Activated B cell treated with CpG ODN at 0.5 μM for 24 hours (primary cell): ENCODE measurements at regions of chr19 and their contacts with region 1.

Region 1: GRCh38 chr19:16584248-16585141 is 12.3 kb upstream of the SLC35E1 start:
- DNase-seq: peak; percentile 78
- ATAC-seq: peak; percentile 46
- H3K4me3 Mint-ChIP-seq: peak overlapping the region; percentile 94
- H3K27ac Mint-ChIP-seq: peak overlapping the region; percentile 99
- H3K4me1 Mint-ChIP-seq: peaks cover 92% of the 10 kb centered on the region
- H3K27me3 Mint-ChIP-seq: no peaks in the 10 kb centered on the region
- CTCF ChIP-seq: no peak

Region 2: DNA sequence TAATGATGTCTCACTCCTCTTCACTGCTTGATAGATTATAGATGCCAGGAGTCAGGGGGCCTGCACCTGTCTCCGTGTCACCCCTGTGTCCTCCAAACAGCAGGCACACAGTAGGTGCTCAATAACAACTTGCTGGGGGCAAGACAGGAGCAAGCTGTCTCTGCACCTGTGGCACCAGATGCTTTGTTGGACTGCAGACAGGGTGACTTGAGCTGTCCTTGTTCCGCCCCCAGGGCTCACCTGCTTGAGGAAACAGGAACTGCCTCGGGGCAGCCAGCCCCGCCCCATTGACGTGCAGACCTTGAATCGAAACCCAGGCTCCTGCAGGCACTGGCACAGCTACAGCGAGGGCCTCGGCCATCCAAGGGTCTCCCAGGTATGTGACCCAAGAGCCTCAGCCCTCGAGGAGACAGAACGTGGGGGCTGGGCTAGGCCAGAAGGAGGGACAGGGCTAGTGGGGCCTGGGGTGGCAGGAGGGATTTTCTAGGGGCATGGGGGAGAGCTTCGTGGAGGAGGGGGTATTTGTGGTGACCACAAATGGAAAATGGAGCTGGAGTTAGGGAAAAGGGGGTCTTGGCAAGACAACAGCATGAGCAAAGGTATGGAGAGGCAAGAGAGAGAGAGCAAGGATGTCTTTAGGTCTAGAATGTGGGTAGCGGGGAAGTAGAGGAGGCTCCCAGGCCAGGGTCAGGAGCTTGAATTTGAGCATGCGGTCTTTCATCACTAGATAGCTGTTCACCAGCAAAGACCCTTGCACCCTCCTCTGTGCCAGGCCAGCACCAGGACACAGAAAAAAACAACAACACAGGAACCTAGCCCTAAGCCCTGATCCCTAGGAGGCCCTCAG is 440.9 kb before region 1 on chr19 and contains the start of gene HSH2D:
- CTCF ChIA-PET with region 1: no interaction called
- POLR2A ChIA-PET with region 1: interaction called, 6 read pairs
- intact Hi-C with region 1: loop called (anchors 5 kb)
- DNase-seq: peak; percentile 82
- ATAC-seq: peak; percentile 71
- H3K4me3 Mint-ChIP-seq: peak within 1 kb of the TSS; percentile 97
- H3K27ac Mint-ChIP-seq: peak within 1 kb of the TSS; percentile 99
- H3K4me1 Mint-ChIP-seq: peaks cover 94% of the 10 kb centered on the region
- H3K27me3 Mint-ChIP-seq: no peaks in the 10 kb centered on the region
- CTCF ChIP-seq: no peak
- total RNA-seq, gene HSH2D: 172 and 191 TPM in 2 replicates

Region 3: GRCh38 chr19:16441661-16442162 is 142.8 kb before region 1 on chr19:
- CTCF ChIA-PET with region 1: interaction called, 3 read pairs
- POLR2A ChIA-PET with region 1: interaction called, 126 read pairs
- intact Hi-C with region 1: loop called (anchors 1 kb)
- DNase-seq: no peak
- ATAC-seq: no peak
- H3K4me3 Mint-ChIP-seq: no peak overlapping the region
- H3K27ac Mint-ChIP-seq: peak overlapping the region; percentile 95
- H3K4me1 Mint-ChIP-seq: peaks cover 82% of the 10 kb centered on the region
- H3K27me3 Mint-ChIP-seq: no peaks in the 10 kb centered on the region
- CTCF ChIP-seq: no peak

Region 4: GRCh38 chr19:16504271-16504670 is 80.2 kb before region 1 on chr19:
- CTCF ChIA-PET with region 1: no interaction called
- POLR2A ChIA-PET with region 1: no interaction called
- intact Hi-C with region 1: no loop called
- DNase-seq: no peak
- ATAC-seq: no peak
- H3K4me3 Mint-ChIP-seq: no peak overlapping the region
- H3K27ac Mint-ChIP-seq: no peak overlapping the region
- H3K4me1 Mint-ChIP-seq: no peaks in the 10 kb centered on the region
- H3K27me3 Mint-ChIP-seq: no peaks in the 10 kb centered on the region
- CTCF ChIP-seq: no peak

Region 5: GRCh38 chr19:16572332-16573211 is 11.9 kb before region 1 on chr19 and contains the start of gene SLC35E1:
- CTCF ChIA-PET with region 1: interaction called, 5 read pairs
- POLR2A ChIA-PET with region 1: interaction called, 190 read pairs
- intact Hi-C with region 1: loop called (anchors 1 kb)
- DNase-seq: peak; percentile 88
- ATAC-seq: peak; percentile 93
- H3K4me3 Mint-ChIP-seq: peak within 1 kb of the TSS; percentile 94
- H3K27ac Mint-ChIP-seq: peak within 1 kb of the TSS; percentile 92
- H3K4me1 Mint-ChIP-seq: peaks cover 49% of the 10 kb centered on the region
- H3K27me3 Mint-ChIP-seq: no peaks in the 10 kb centered on the region
- CTCF ChIP-seq: no peak
- total RNA-seq, gene SLC35E1: 41.6 and 51.7 TPM in 2 replicates

Region 6: DNA sequence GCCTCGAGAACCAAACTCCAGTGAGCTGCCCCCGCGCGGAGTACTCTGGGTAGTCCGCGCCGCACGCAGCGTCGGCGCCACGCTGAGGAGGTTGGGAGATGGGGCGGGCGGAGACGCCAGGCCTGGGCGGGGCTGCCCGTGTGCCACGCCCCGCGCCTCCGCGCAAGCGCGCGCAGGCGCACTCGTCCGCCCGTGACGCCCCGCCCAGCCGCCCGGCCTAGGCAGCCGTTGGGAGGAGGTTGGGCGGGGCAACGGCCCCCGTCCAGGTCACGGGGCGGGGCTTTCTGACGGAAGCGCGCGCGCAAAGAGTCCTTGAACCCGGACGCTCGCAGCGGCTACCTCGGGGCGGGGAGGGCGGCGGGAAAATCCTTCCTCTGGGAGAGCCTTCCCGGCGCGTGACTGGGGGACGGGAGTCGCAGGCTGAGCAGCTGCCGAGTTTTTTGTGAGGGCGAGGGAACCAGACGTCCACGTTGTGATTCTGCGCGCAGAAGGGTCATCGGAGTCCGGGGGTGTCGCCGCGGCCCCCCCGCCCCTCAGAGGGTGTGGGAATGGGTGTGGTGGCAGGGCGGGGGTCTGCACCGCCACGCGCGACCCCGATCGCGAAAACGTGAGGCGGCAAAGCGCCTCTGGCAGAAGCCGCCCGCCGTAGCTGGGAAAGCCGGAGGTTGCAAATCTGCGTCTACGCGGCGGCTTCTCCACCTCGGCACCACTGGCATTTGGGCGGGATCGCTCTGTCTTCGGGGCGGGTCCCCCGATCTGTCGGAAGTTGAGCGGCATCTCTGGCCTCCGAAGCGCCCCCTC is 43.9 kb after region 1 on chr19 and contains the start of gene MED26:
- CTCF ChIA-PET with region 1: interaction called, 6 read pairs
- POLR2A ChIA-PET with region 1: interaction called, 242 read pairs
- intact Hi-C with region 1: loop called (anchors 1 kb)
- DNase-seq: peak; percentile 93
- ATAC-seq: peak; percentile 94
- H3K4me3 Mint-ChIP-seq: peak within 1 kb of the TSS; percentile 98
- H3K27ac Mint-ChIP-seq: peak within 1 kb of the TSS; percentile 94
- H3K4me1 Mint-ChIP-seq: peaks cover 51% of the 10 kb centered on the region
- H3K27me3 Mint-ChIP-seq: no peaks in the 10 kb centered on the region
- CTCF ChIP-seq: no peak
- total RNA-seq, gene MED26: 32.0 and 36.1 TPM in 2 replicates

Region 7: GRCh38 chr19:16897154-16897855 is 312.8 kb after region 1 on chr19:
- CTCF ChIA-PET with region 1: no interaction called
- POLR2A ChIA-PET with region 1: interaction called, 4 read pairs
- intact Hi-C with region 1: loop called (anchors 5 kb)
- DNase-seq: peak; percentile 67
- ATAC-seq: peak; percentile 74
- H3K4me3 Mint-ChIP-seq: peak overlapping the region; percentile 81
- H3K27ac Mint-ChIP-seq: peak overlapping the region; percentile 24
- H3K4me1 Mint-ChIP-seq: peaks cover 46% of the 10 kb centered on the region
- H3K27me3 Mint-ChIP-seq: no peaks in the 10 kb centered on the region
- CTCF ChIP-seq: no peak

Region 8: DNA sequence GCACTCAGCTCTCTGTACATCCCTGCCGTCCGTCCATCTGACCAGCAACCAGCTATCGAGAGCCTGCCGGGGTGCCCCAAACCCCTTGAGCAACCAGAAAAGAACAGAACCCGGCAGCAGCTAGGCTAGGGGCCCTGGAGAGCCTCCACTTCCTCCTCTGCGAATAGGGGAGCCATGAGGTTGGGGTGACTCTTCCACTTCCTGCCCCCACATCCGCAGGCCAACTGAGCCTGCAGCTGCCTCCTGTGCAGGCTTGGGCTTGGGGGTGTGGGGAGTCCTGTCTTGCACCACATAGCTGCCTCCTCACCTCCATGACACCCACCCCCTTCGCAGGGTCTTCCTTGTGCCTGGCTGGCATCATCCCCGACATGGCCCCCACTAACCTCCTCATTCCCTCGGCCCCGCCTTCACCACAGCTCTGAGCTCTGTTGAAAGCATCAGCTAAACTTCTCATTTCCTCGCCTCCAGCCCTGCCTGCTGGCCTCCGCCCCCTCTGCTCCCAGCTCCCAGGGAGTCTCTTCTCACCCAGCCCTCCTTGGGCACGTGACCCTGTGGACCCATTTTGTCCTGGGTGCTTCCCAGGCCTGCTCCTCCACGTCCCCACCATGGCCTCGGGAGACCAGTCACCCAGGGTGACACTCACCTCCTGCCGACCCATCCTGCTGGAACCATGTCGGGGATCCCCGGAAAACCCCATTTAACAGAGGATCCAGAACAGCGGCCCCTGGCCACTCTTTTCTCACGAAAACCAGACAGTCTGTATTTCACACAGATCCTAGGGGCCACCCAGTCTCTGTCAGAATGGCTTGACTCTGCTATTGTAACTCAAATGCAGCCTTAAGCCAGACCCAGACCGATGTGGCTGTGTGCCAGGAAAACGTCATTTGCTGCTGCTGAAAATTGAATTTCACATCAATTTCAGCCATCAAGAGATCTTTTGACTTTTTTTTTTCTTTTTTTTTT is 541.5 kb after region 1 on chr19:
- CTCF ChIA-PET with region 1: no interaction called
- POLR2A ChIA-PET with region 1: no interaction called
- intact Hi-C with region 1: no loop called
- DNase-seq: peak; percentile 51
- ATAC-seq: peak; percentile 77
- H3K4me3 Mint-ChIP-seq: peak overlapping the region; percentile 84
- H3K27ac Mint-ChIP-seq: peak overlapping the region; percentile 98
- H3K4me1 Mint-ChIP-seq: peaks cover 66% of the 10 kb centered on the region
- H3K27me3 Mint-ChIP-seq: no peaks in the 10 kb centered on the region
- CTCF ChIP-seq: no peak